Lower leg skin (tissue), 4 donors: ENCODE measurements at regions of chr10 and their contacts with region 1.

Region 1: DNA sequence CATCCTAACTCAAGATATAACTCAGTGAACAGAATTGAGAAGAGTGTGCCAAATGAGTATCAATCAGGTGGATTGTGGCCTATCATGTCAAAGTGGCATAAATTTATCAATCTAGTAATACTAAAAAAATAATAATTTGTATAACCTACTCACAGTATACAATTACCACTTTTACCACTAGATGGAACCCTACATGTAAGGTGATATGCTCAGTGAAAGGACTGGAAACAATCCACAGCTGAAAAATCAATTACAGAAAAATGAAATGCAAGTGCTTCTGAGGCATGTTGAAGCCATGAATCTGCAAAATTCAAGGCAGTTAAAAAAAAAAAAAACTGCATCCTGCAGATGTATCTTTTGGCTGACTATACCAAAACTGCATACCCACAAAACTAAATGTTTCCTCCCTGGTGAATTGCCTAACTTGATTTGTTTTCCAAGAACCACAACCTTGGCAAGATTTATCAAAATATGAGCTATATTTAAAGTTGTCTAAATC is 13.9 kb downstream of the ARHGAP19 start:
- DNase-seq: no peak
- H3K4me3 ChIP-seq: no peak overlapping the region
- CTCF ChIP-seq: peak in 1 of 3 donors; percentile 22
- POLR2A ChIP-seq: no peak

Region 2: DNA sequence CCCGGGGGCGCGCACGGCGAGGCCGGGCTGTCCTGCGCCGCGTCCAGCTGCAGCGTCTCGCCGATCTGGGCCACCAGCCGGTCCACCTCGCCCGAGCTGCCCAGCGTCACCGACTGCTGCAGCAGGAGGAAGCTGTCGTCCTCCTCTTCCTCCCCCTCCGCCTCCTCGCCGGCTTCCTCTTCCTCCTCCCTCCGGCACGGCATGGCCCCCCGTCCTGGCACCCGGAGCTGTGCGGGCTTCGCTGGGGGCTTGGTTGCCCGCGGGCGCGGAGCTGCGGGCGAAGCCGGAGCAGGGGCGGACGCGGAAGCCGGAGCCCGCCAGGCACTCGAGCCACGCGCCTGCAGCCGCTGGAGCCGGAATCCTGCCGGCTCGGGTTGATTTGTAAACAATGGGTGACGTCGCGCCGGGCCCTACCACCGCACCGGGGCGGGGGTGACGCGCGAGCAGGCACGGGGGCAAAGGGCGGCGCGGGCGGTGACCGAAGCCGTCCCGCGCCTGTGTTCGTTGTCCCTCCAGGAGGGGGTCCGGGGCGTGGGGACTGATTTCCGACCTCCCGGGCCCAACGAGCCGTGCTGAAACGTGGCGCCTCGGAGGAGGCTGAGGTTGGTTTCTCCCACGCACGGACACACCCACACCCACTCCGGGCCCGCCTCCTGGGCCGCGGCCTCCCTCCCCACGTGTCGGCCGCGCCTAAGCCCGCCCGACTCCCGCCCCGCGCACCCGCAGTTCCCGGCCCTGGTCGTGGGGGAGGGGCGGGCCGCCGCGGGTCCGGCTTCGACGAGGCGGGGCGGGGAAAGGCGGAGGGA is 56.0 kb after region 1 on chr10 and contains the start of gene FRAT2:
- intact Hi-C with region 1: loop called (anchors 10 kb)
- DNase-seq: peak; percentile 89 to 98
- H3K4me3 ChIP-seq: peak within 1 kb of the TSS; percentile 92
- CTCF ChIP-seq: no peak
- POLR2A ChIP-seq: no peak
- total RNA-seq, gene FRAT2: 40.9 to 62.0 (median 57.7) TPM